AG04449 (cell line): ENCODE measurements at regions of chr13 and their contacts with region 1.

Region 1: DNA sequence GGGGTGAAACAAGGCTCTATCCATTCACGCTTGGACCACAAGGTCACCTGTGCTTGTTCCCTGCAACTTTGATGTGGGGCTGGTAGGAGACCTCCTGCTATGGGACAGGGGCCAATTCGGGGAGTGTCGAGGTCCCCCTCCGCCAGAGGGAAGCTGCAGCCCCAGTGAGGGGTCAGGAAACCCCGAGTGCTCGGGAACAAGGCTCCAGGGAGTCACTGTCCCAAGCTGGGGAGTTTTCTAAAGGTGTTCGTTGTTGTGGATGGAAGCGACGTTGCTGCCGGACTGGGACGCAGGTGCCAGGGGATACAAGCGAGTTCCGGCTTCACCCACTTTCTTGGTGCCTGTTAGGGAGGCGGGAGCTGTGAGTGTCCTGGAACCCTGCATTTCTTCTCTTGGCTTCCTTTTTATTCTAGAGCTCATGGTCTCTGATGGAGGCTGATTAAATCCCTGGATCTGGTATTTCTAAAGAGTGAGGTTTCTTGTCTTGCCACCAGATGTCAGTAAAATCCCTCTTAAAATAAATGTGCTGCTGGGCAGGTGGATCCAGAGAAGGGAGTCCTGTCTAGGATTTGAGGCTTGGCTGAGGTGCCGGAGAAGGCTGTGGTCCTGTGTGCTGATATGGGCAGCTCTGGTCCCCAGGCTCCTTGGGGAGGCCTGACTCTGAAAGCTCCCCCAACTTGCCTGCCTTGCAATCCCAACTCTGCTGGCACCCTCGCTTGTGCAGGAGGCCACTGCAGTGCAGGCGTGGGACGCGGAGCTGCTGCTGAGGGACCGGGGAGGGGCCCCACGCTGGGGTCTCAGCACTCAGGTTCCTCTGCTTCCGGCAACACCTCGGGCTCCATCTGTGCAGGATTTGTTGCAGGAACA is 153.9 kb downstream of the TEX29 start:
- DNase-seq: peak; percentile 7
- H3K4me3 ChIP-seq: no peak overlapping the region
- CTCF ChIP-seq: peak; percentile 35

Region 2: DNA sequence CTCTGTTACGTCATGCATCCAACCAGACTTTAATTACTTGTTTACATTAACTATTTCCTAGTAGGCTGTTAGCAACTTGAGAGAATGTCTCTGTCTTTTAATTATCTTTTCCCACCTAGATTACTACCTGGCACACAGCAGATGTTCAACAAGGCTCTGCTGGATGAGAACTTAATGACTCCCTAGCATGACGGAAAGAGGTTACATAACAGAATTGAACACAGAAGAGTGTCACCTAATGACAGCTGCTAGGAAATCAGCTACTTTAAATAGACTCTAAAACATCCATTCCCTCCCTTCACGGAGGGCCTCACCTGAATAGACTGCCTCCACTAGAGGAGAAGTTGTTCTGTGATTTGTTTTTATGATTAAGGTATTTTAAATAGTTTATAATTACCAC is 43.2 kb before region 1 on chr13:
- CTCF ChIA-PET with region 1: no interaction called
- POLR2A ChIA-PET with region 1: no interaction called
- DNase-seq: no peak
- H3K4me3 ChIP-seq: no peak overlapping the region
- CTCF ChIP-seq: no peak

Region 3: DNA sequence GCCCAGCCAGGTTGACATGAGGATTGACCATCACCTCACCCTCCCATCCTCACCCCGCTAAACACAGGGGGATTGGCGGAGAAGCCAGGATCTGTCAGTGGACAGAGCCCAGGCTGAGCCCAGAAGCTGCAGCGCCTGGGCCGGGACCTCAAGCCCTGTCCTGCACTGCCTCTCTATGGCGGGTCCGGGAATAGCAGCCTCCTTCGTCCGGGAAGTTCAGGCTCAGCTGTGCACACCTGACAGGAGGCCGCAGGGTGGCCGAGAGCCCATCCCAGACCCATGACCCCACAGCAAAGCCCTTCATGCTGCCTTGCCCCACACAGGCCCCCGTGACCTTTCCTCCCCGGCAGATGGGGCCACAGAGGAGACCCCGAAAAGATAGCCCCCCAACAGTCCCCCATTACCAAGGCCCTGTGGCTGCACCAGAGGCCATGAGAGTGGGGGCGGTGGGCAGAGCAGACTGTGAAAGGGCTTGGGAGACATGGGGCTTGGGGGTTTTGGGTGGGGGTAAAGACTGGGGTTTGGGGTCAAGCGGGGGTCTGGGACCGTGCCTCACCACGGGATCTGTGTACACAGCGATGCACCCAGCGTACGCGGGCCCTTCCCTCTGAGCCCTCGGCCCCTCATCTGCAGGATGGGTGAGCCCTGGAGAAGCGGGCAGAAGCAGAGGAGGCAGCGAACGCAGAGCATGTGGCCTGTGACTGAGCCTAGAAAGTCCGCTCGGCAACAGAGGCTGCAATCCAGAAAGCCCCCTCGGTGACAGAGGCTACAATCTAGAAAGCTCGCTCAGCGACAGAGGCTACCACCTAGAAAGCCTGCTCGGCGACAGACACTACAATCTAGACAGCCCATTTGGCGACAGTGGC is 969.9 kb after region 1 on chr13:
- CTCF ChIA-PET with region 1: interaction called, 44 read pairs
- POLR2A ChIA-PET with region 1: no interaction called
- DNase-seq: no peak
- H3K4me3 ChIP-seq: no peak overlapping the region
- CTCF ChIP-seq: peak; percentile 85

Region 4: GRCh38 chr13:112510002-112510780 is 1035.8 kb after region 1 on chr13:
- CTCF ChIA-PET with region 1: interaction called, 11 read pairs
- POLR2A ChIA-PET with region 1: no interaction called
- DNase-seq: no peak
- H3K4me3 ChIP-seq: no peak overlapping the region
- CTCF ChIP-seq: peak; percentile 47